ENCODE measurements at regions of chr17 and their contacts with region 1.

Region 1: GRCh38 chr17:53696286-53696685 is 126.4 kb upstream of the KIF2B start:
- DNase-seq: no peak
- H3K4me3 Mint-ChIP-seq: no peak overlapping the region
- H3K27ac Mint-ChIP-seq: no peak overlapping the region
- H3K4me1 Mint-ChIP-seq: no peaks in the 10 kb centered on the region
- H3K27me3 Mint-ChIP-seq: no peaks in the 10 kb centered on the region

Region 2: DNA sequence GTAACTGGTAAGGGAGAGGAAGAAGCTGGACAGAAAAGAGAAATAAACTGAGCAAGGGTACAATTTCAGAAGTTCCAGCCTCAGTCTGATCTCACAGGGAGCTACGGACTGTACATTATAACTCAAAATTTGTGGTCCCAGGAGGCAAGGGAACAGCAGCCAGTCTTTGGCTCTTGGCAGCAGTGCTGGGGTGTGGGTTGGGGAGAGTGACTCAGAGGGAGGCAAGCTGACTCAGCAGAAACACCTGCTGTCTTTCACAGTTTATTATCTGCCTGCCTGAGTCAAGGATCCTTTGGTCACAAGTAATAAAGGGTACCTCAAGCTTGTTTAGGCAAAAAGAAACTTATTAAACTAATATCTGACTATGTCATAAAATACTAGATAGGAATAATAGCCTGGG is 52.9 kb after region 1 on chr17:
- intact Hi-C with region 1: loop called (anchors 10 kb)
- DNase-seq: no peak
- H3K4me3 Mint-ChIP-seq: no peak overlapping the region
- H3K27ac Mint-ChIP-seq: no peak overlapping the region
- H3K4me1 Mint-ChIP-seq: no peaks in the 10 kb centered on the region
- H3K27me3 Mint-ChIP-seq: no peaks in the 10 kb centered on the region

Measured in activated T-helper 1 cell treated with anti-CD3 and anti-CD28 coated beads, Interleukin-12 subunit alpha, Interleukin-12 subunit beta, Interleukin-2, Interleukin-4 antibody, amounts not matched to agents 30 ng/mL and 10 ng/mL and 1 ng/mL, durations not matched to agents 14 hours and 24 hours and 36 hours (primary cell).